ENCODE measurements at regions of chr5 and their contacts with region 1.

Region 1: DNA sequence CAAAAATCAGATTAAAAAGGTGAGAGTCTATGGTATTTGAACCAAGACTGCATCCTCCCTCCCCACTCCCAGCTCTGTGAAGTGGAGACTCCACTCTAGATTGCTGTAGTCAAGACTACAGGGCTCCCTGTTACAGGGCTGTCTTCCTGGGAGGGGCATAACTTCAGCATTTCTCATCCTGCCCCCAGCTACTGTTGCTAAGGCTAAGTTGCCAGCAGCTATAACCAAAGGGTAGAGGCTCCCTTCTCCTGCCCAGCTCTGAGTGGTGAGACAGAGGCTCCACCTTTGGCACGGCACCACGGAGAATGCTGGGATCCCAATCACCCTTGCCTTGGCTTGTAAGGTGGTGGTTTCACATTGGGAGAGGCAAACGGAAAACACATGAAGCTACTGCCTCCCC is 39.2 kb upstream of the GCNT4 start:
- DNase-seq: no peak
- H3K4me3 ChIP-seq: no peak overlapping the region
- H3K4me3 Mint-ChIP-seq: no peak overlapping the region
- H3K27ac Mint-ChIP-seq: no peak overlapping the region
- H3K4me1 ChIP-seq: no peaks in the 10 kb centered on the region
- H3K4me1 Mint-ChIP-seq: no peaks in the 10 kb centered on the region
- H3K27me3 ChIP-seq: no peaks in the 10 kb centered on the region
- H3K27me3 Mint-ChIP-seq: no peaks in the 10 kb centered on the region
- CTCF ChIP-seq: no peak

Region 2: GRCh38 chr5:74851684-74852353 is 239.8 kb before region 1 on chr5:
- CTCF ChIA-PET with region 1: no interaction called
- POLR2A ChIA-PET with region 1: no interaction called
- intact Hi-C with region 1: no loop called
- DNase-seq: no peak
- H3K4me3 ChIP-seq: no peak overlapping the region
- H3K4me3 Mint-ChIP-seq: no peak overlapping the region
- H3K27ac Mint-ChIP-seq: no peak overlapping the region
- H3K4me1 ChIP-seq: peaks cover 12% of the 10 kb centered on the region
- H3K4me1 Mint-ChIP-seq: peaks cover 15% of the 10 kb centered on the region
- H3K27me3 ChIP-seq: no peaks in the 10 kb centered on the region
- H3K27me3 Mint-ChIP-seq: no peaks in the 10 kb centered on the region
- CTCF ChIP-seq: no peak

Region 3: DNA sequence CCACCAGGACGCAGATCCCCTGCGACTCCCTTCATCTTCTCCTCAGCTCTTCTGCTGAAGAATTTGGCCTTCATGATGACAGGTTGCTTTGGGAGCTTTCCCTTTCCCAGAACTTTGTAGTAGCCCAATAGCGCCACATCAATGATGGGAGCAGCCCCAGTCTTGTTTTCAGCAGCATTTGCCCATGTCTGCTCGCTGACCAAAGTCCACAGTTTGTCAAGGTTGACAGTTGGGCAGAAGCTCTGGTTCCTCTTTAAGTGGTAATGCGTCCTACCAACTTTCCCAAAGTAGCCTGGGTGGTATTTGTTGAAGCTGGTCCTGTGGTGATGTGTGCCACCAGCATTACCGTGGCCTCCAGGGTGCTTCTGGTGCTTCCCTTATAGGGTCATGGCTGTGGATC is 101.4 kb before region 1 on chr5:
- CTCF ChIA-PET with region 1: no interaction called
- POLR2A ChIA-PET with region 1: interaction called, 19 read pairs
- intact Hi-C with region 1: no loop called
- DNase-seq: no peak
- H3K4me3 ChIP-seq: no peak overlapping the region
- H3K4me3 Mint-ChIP-seq: no peak overlapping the region
- H3K27ac Mint-ChIP-seq: no peak overlapping the region
- H3K4me1 ChIP-seq: no peaks in the 10 kb centered on the region
- H3K4me1 Mint-ChIP-seq: no peaks in the 10 kb centered on the region
- H3K27me3 ChIP-seq: no peaks in the 10 kb centered on the region
- H3K27me3 Mint-ChIP-seq: no peaks in the 10 kb centered on the region
- CTCF ChIP-seq: no peak